Endothelial cell of umbilical vein (primary cell): ENCODE measurements at regions of chr13 and their contacts with region 1.

Region 1: GRCh38 chr13:33874873-33875272 is 56.9 kb downstream of the RFC3 start:
- DNase-seq: peak; percentile 17
- H3K4me3 ChIP-seq: no peak overlapping the region
- H3K27ac ChIP-seq: no peak overlapping the region
- H3K4me1 ChIP-seq: peaks cover 17% of the 10 kb centered on the region
- H3K27me3 ChIP-seq: no peaks in the 10 kb centered on the region
- CTCF ChIP-seq: peak in 1 of 2 donors; percentile 9
- POLR2A ChIP-seq: no peak

Region 2: GRCh38 chr13:33775339-33776108 is 99.3 kb before region 1 on chr13:
- CTCF ChIA-PET with region 1: no interaction called
- POLR2A ChIA-PET with region 1: no interaction called
- dilution Hi-C with region 1: no loop called
- intact Hi-C with region 1: no loop called
- DNase-seq: no peak
- H3K4me3 ChIP-seq: no peak overlapping the region
- H3K27ac ChIP-seq: no peak overlapping the region
- H3K4me1 ChIP-seq: no peaks in the 10 kb centered on the region
- H3K27me3 ChIP-seq: peaks cover 8 to 18% of the 10 kb centered on the region in 2 experiments
- CTCF ChIP-seq: no peak
- POLR2A ChIP-seq: no peak

Region 3: DNA sequence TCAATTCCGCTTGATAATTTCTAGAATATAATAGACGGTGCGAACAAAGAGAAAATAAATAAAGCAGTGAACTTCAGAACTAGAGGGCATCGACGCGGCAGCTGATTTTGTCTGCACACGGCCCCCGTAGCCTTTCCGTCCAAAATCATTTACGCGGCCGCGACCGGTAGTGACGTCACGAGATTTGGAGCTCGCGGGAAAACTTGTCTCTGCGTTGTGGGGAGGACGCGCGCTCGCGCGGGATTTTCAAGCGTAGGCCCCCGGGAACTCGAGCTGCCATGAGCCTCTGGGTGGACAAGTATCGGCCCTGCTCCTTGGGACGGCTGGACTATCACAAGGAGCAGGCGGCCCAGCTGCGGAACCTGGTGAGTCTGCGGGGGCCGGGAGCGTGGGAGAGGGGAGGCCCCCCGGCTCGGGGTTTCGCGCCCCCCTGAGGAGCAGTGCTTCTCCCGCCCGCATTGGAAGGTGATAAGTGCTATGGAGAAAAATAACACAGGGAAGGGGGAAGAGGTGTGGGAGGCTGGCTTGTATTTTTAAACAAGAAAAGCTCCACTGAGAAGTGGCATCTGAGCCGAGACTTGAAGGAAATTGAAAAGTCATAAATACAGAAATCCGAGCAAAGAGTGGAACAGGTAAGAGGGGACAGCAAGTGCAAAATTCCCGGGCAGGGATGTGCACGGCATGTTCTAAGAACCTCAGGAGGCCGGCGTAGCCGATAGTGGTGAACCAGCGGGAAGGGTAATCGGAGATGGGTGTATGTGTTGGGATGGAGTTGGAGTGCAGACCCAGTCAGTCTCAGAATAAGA is 56.8 kb before region 1 on chr13 and contains the start of gene RFC3:
- CTCF ChIA-PET with region 1: interaction called, 3 read pairs
- POLR2A ChIA-PET with region 1: no interaction called
- dilution Hi-C with region 1: no loop called
- intact Hi-C with region 1: loop called (anchors 1 kb)
- DNase-seq: peak; percentile 94
- H3K4me3 ChIP-seq: peak within 1 kb of the TSS; percentile 65 to 99 (median 99)
- H3K27ac ChIP-seq: peak within 1 kb of the TSS; percentile 85
- H3K4me1 ChIP-seq: peaks cover 9% of the 10 kb centered on the region
- H3K27me3 ChIP-seq: no peaks in the 10 kb centered on the region
- CTCF ChIP-seq: no peak
- POLR2A ChIP-seq: peak; percentile 48
- total RNA-seq, gene RFC3: 17.9 and 19.5 TPM in 2 replicates

Region 4: GRCh38 chr13:33832872-33833271 is 42.0 kb before region 1 on chr13:
- CTCF ChIA-PET with region 1: no interaction called
- POLR2A ChIA-PET with region 1: no interaction called
- dilution Hi-C with region 1: no loop called
- intact Hi-C with region 1: loop called (anchors 2 kb)
- DNase-seq: peak; percentile 75
- H3K4me3 ChIP-seq: no peak overlapping the region
- H3K27ac ChIP-seq: peak overlapping the region; percentile 54
- H3K4me1 ChIP-seq: peaks cover 10% of the 10 kb centered on the region
- H3K27me3 ChIP-seq: no peaks in the 10 kb centered on the region
- CTCF ChIP-seq: no peak
- POLR2A ChIP-seq: no peak

Region 5: DNA sequence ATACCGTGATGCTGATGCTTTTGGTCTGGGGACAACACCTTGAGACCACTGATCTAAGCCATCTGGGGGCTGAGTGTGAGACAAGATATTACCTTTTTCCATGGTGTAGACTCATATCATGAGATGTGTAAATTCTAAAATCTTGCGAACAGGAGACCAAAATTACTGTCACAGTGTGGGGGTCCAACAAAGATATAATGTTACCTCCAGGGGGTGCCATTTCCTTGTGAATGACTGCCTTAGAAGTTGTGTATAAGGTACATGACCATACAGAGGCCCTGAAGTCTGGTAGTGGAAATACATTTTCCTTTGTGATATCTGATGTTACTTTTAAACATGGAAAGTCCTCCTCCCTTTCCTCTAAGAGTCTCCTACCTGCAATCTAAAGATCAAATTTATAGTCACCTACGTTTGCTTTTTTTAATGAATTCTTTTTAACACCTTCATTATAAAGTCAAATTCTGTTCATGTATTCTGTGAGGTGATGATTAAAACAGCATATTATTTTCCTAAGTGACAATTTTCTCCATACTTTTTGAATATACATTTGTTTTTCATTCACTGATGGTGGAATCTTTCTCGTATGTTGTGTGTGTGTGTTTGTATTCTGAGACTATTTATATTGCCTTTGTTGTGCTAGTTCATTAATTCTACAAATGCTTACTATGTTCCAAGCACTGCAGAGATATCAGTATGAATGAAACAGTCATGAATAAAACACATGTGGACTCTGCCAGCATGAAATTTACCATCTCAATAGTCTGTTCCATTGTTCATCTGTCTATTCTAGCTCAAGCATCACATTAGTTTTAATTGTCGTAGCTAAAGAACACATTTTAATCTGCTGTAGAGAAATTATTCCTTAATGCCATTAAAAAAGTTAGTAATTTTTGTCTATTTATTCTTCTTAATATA is 56.8 kb after region 1 on chr13:
- CTCF ChIA-PET with region 1: interaction called, 6 read pairs
- POLR2A ChIA-PET with region 1: no interaction called
- dilution Hi-C with region 1: no loop called
- intact Hi-C with region 1: loop called (anchors 5 kb)
- DNase-seq: peak; percentile 39
- H3K4me3 ChIP-seq: no peak overlapping the region
- H3K27ac ChIP-seq: no peak overlapping the region
- H3K4me1 ChIP-seq: no peaks in the 10 kb centered on the region
- H3K27me3 ChIP-seq: no peaks in the 10 kb centered on the region
- CTCF ChIP-seq: peak in 1 of 2 donors; percentile 52
- POLR2A ChIP-seq: no peak

Region 6: DNA sequence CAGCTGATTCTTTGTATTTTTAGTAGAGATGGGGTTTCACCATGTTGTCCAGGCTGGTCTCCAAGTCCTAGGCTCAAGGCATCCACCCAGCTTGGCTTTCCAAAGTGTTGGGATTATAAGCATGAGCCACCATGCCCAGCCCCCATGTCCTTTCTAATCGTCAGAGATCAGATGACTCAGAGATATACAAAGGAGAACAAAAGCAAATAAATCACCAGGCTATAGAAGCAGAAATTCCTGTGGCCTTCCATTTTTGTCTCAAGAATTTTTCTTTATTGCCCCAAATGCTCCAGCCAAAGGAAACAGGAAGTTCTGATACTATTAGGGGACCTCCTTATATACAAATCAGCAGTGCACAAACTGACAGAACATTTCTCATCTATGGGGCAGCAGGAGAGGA is 150.9 kb after region 1 on chr13:
- CTCF ChIA-PET with region 1: no interaction called
- POLR2A ChIA-PET with region 1: no interaction called
- dilution Hi-C with region 1: no loop called
- intact Hi-C with region 1: loop called (anchors 2 kb)
- DNase-seq: peak; percentile 57
- H3K4me3 ChIP-seq: no peak overlapping the region
- H3K27ac ChIP-seq: peak overlapping the region; percentile 71
- H3K4me1 ChIP-seq: peaks cover 13% of the 10 kb centered on the region
- H3K27me3 ChIP-seq: no peaks in the 10 kb centered on the region
- CTCF ChIP-seq: no peak
- POLR2A ChIP-seq: no peak